ENCODE measurements at regions of chr17 and their contacts with region 1.

Region 1: GRCh38 chr17:40678902-40679522 is 14.0 kb upstream of the KRT222 start:
- DNase-seq: no peak
- ATAC-seq: peak; percentile 84
- H3K4me3 ChIP-seq: no peak overlapping the region; the same call in 1 of the 2 replicates
- H3K27ac ChIP-seq: no peak overlapping the region
- H3K4me1 ChIP-seq: no peaks in the 10 kb centered on the region
- H3K27me3 ChIP-seq: peaks cover 0 to 8% of the 10 kb centered on the region in 2 experiments; a peak in 1 of 4 replicates
- CTCF ChIP-seq: no peak
- EP300 ChIP-seq: peak in 1 of 2 experiments; percentile 52; a peak in 1 of 4 replicates
- POLR2A ChIP-seq: no peak
- RAD21 ChIP-seq: no peak

Region 2: DNA sequence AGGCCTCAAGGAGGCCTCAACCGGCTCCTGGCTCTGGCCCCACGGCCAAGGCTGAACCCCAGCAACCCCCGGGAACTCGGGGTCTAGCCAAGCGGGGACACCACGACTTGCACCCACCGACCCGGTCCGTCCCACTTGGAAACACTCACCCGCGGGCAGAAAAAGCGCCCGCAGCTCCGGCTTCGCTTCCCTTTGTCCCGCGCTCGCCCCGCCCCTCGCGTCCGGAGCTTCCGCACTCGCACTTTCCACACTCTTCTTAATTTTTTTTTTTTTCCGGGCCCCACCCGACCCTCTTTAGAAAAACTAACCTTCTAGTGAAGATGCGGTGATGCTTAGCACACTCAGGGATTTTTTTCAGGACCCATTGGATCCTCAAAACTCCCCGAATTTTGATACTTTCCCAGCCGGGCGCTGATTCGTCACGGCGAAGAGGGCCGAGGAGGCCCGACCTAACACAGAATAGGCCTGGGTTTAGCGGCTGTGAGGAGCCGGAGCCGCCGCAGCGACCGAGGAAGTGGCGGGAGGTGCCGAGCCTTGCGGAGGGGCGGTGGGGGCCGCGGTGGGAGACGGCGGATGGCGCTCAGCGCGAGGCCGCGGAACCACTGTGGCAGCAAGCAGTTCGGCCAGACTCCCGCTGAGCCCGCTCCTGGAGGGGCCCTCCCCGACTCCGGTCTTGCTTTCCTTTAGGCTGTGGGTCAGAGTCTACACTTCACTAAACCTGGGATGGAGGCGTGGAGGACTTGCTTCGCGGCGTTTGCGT is 31.2 kb before region 1 on chr17 and contains the start of gene SMARCE1:
- CTCF ChIA-PET with region 1: interaction called, 8 read pairs
- POLR2A ChIA-PET with region 1: no interaction called
- RAD21 ChIA-PET with region 1: interaction called, 11 read pairs
- SMC1A ChIA-PET with region 1: interaction called, 12 read pairs
- in situ Hi-C with region 1: no loop called
- intact Hi-C with region 1: no loop called
- DNase-seq: no peak
- ATAC-seq: peak; percentile 85
- H3K4me3 ChIP-seq: peak within 1 kb of the TSS; percentile 89
- H3K27ac ChIP-seq: peak within 1 kb of the TSS; percentile 98
- H3K4me1 ChIP-seq: no peaks in the 10 kb centered on the region
- H3K27me3 ChIP-seq: no peaks in the 10 kb centered on the region
- CTCF ChIP-seq: no peak
- EP300 ChIP-seq: peak in 1 of 2 experiments; percentile 99; a peak in 2 of 4 replicates
- POLR2A ChIP-seq: peak; percentile 89
- RAD21 ChIP-seq: no peak
- polyA plus RNA-seq, gene SMARCE1: 124 to 145 TPM

Region 3: GRCh38 chr17:40696537-40697072 is 17.6 kb after region 1 on chr17:
- CTCF ChIA-PET with region 1: interaction called, 18 read pairs
- POLR2A ChIA-PET with region 1: no interaction called
- RAD21 ChIA-PET with region 1: interaction called, 4 read pairs
- SMC1A ChIA-PET with region 1: interaction called, 58 read pairs
- in situ Hi-C with region 1: no loop called
- intact Hi-C with region 1: no loop called
- DNase-seq: no peak
- ATAC-seq: no peak
- H3K4me3 ChIP-seq: no peak overlapping the region
- H3K27ac ChIP-seq: no peak overlapping the region
- H3K4me1 ChIP-seq: no peaks in the 10 kb centered on the region
- H3K27me3 ChIP-seq: no peaks in the 10 kb centered on the region; a peak in 1 of 4 replicates
- CTCF ChIP-seq: no peak
- EP300 ChIP-seq: no peak
- POLR2A ChIP-seq: no peak
- RAD21 ChIP-seq: no peak

Region 4: GRCh38 chr17:40726919-40727318 is 47.9 kb after region 1 on chr17:
- CTCF ChIA-PET with region 1: interaction called, 3 read pairs
- POLR2A ChIA-PET with region 1: interaction called, 3 read pairs
- RAD21 ChIA-PET with region 1: interaction called, 10 read pairs
- SMC1A ChIA-PET with region 1: interaction called, 10 read pairs
- in situ Hi-C with region 1: no loop called
- intact Hi-C with region 1: no loop called
- DNase-seq: no peak
- ATAC-seq: peak; percentile 49
- H3K4me3 ChIP-seq: no peak overlapping the region
- H3K27ac ChIP-seq: no peak overlapping the region
- H3K4me1 ChIP-seq: peaks cover 3% of the 10 kb centered on the region; the same call in 1 of the 2 replicates
- H3K27me3 ChIP-seq: no peaks in the 10 kb centered on the region; a peak in 1 of 4 replicates
- CTCF ChIP-seq: peak in 1 of 3 experiments; percentile 22; a peak in 2 of 6 replicates
- EP300 ChIP-seq: no peak
- POLR2A ChIP-seq: no peak
- RAD21 ChIP-seq: no peak

Region 5: GRCh38 chr17:40779181-40779909 is 100.3 kb after region 1 on chr17:
- CTCF ChIA-PET with region 1: no interaction called
- POLR2A ChIA-PET with region 1: no interaction called
- RAD21 ChIA-PET with region 1: no interaction called
- SMC1A ChIA-PET with region 1: no interaction called
- in situ Hi-C with region 1: no loop called
- intact Hi-C with region 1: loop called (anchors 5 kb)
- DNase-seq: no peak
- ATAC-seq: no peak
- H3K4me3 ChIP-seq: no peak overlapping the region
- H3K27ac ChIP-seq: no peak overlapping the region
- H3K4me1 ChIP-seq: no peaks in the 10 kb centered on the region
- H3K27me3 ChIP-seq: peaks cover 0 to 6% of the 10 kb centered on the region in 2 experiments; a peak in 1 of 4 replicates
- CTCF ChIP-seq: no peak
- EP300 ChIP-seq: no peak
- POLR2A ChIP-seq: no peak
- RAD21 ChIP-seq: no peak

Region 6: DNA sequence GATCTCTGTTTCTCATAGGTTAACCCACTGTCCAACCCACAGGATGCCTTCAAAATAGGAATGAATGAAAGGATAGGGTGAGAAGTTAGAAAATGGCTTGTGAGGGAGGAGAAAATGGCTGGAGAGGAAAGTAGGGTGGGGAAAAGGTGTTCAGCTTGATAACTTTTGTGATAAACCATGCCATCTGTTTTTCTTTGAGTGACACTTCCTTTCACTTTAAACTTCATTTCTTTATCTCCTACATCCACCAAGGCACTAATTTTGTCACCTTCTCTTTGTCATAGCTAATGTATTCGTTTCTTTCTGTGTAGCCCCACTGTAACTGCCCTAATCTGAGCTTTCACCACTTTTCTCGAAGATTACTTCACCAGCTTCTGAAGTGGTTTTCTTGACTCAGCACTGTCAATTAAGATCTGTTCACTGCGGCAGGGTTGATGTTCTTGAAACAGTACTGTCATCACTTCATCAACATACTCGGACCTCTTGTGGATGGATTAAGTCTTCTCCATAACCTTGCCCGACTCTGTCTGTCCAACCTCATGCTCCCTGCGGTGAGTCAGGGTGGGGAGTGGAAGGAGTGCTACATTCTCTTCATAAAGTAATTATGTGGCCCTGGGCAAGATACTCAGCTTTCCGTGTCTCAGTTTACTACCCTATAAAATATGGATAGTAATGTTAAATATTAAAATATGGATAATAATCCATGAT is 148.9 kb after region 1 on chr17:
- CTCF ChIA-PET with region 1: no interaction called
- POLR2A ChIA-PET with region 1: no interaction called
- RAD21 ChIA-PET with region 1: no interaction called
- SMC1A ChIA-PET with region 1: no interaction called
- in situ Hi-C with region 1: no loop called
- intact Hi-C with region 1: no loop called
- DNase-seq: no peak
- ATAC-seq: peak; percentile 45
- H3K4me3 ChIP-seq: no peak overlapping the region
- H3K27ac ChIP-seq: no peak overlapping the region
- H3K4me1 ChIP-seq: peaks cover 4% of the 10 kb centered on the region; the same call in 1 of the 2 replicates
- H3K27me3 ChIP-seq: no peaks in the 10 kb centered on the region
- CTCF ChIP-seq: no peak
- EP300 ChIP-seq: no peak
- POLR2A ChIP-seq: no peak
- RAD21 ChIP-seq: no peak